Vagina (tissue), 2 donors: ENCODE measurements at regions of chr15 and their contacts with region 1.

Region 1: DNA sequence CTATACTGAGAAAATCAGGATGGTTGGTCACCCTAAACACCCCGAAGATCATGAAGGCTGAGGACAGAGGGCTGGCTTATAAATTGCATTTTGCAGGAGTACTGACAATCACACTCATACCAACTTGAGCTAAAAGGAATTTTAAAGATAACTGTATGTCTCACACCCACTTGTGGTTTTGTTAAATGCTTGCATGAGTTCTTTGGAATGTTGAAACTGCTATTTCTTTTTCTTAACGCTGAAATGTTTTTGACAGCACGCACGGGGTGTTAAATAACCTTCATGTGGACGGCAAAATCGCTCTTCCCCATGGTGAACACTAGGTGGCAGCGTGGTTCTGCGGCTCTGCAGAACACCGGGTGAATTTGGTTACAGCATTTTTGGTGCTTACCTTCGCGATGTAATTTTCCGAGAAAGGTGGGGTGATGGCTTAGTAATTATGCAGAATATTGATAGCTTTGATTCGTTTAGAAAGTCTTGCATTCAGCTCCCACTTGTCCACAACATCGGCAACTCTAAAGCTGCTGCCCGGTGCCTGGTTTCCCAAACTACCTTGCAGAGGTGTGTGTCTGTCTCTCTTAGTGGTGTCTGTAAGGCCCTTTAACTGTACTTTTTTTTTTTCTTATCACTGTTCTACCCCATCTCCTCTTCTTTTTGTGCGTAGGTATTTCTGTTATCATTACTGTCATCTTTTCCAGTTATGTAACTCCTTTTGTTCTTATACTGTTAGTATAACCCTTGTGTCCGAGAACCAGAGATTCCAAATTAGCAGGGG is 51.7 kb downstream of the ARNT2 start:
- DNase-seq: no peak
- H3K4me3 ChIP-seq: no peak overlapping the region
- H3K27ac ChIP-seq: no peak overlapping the region
- H3K4me1 ChIP-seq: peaks cover 9% of the 10 kb centered on the region
- H3K27me3 ChIP-seq: no peaks in the 10 kb centered on the region
- CTCF ChIP-seq: peak; percentile 86 to 96 (median 92)
- POLR2A ChIP-seq: no peak

Region 2: GRCh38 chr15:80526556-80527340 is 70.9 kb after region 1 on chr15:
- intact Hi-C with region 1: no loop called
- DNase-seq: no peak
- H3K4me3 ChIP-seq: no peak overlapping the region
- H3K27ac ChIP-seq: peak overlapping the region; percentile 57
- H3K4me1 ChIP-seq: peaks cover 14% of the 10 kb centered on the region
- H3K27me3 ChIP-seq: no peaks in the 10 kb centered on the region
- CTCF ChIP-seq: no peak
- POLR2A ChIP-seq: no peak

Region 3: GRCh38 chr15:80776420-80777045 is 320.7 kb after region 1 on chr15:
- intact Hi-C with region 1: loop called (anchors 10 kb)
- DNase-seq: no peak
- H3K4me3 ChIP-seq: no peak overlapping the region
- H3K27ac ChIP-seq: no peak overlapping the region
- H3K4me1 ChIP-seq: peaks cover 36% of the 10 kb centered on the region
- H3K27me3 ChIP-seq: no peaks in the 10 kb centered on the region
- CTCF ChIP-seq: peak; percentile 44 to 62 (median 57)
- POLR2A ChIP-seq: no peak

Region 4: GRCh38 chr15:80970018-80970658 is 514.3 kb after region 1 on chr15:
- intact Hi-C with region 1: loop called (anchors 10 kb)
- DNase-seq: peak in 1 of 2 donors; percentile 64
- H3K4me3 ChIP-seq: no peak overlapping the region
- H3K27ac ChIP-seq: no peak overlapping the region
- H3K4me1 ChIP-seq: no peaks in the 10 kb centered on the region
- H3K27me3 ChIP-seq: no peaks in the 10 kb centered on the region
- CTCF ChIP-seq: peak; percentile 70 to 84 (median 80)
- POLR2A ChIP-seq: no peak